Activated CD4-positive, alpha-beta T cell treated with anti-CD3 and anti-CD28 coated beads, Interleukin-2, amount 10 ng/mL, durations not matched to agents 24 days and 14 days (primary cell): ENCODE measurements at regions of chr1 and their contacts with region 1.

Region 1: DNA sequence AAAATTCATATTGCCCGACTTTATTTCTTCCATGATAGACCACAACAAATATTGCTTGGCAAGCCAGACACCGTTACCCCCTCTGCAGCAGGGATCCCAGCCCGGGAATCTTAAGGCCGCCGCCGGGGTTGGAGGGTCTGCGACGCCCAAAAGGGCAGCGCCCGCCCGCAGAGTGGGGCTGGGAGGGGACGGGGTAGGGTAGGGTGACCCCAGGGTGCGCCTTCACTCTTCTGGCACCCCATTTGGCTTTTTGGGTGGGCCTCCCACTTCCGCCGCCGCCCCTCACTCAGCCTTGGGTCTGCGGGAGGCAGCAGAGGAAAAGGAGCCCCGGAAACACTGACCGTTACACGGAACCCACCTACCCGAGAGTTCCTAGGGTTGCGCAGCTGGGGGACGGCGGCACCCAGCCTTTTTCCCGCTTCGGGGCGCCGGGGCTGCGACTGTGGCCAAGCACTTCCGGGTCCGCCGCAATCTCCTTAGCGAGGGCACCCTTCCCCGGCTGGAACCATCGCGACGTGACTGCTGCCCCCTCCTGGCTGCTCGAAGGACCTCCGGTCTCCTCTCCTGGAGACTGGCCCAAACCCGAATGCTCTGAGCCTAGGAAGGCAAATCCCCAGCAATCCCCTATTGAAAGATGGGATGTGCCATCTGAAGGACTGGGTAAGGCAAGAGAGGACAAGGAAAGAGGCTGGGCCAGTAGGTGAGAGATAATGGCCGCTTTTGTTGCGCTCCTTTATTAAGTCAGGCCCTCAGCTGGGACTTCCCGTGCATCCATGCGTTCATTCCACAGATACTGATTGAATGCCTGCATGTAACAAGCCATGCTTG is at the start of gene PIGC:
- DNase-seq: peak; percentile 97
- H3K4me3 Mint-ChIP-seq: peak within 1 kb of the TSS; percentile 91
- H3K27ac Mint-ChIP-seq: peak within 1 kb of the TSS; percentile 88
- H3K4me1 Mint-ChIP-seq: peaks cover 27% of the 10 kb centered on the region
- H3K27me3 Mint-ChIP-seq: no peaks in the 10 kb centered on the region
- total RNA-seq, gene PIGC: 20.4 and 23.9 TPM in 2 replicates

Region 2: DNA sequence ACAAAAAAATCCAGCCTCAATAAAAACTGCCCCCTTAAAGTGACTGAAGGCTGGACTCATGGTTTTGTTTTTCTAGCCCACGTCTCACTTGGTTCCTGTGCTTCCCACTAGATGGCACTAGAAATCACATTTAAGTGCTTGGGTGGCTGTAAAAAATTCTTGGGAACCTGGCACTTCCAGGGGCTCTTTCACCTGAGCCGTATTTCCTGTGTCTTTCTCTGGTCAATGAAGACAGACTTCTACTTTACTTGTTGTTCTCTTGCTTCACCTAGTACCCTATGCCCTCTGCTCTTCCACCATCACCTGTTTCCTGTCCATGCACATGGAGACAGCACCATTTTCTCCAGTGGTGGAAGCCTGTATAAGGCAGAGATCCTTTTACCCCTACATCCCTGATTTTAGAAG is 642.4 kb before region 1 on chr1:
- intact Hi-C with region 1: loop called (anchors 10 kb)
- DNase-seq: no peak
- H3K4me3 Mint-ChIP-seq: no peak overlapping the region
- H3K27ac Mint-ChIP-seq: no peak overlapping the region
- H3K4me1 Mint-ChIP-seq: peaks cover 7% of the 10 kb centered on the region
- H3K27me3 Mint-ChIP-seq: no peaks in the 10 kb centered on the region

Region 3: GRCh38 chr1:172002725-172003345 is 441.0 kb before region 1 on chr1:
- intact Hi-C with region 1: loop called (anchors 1 kb)
- DNase-seq: peak; percentile 80
- H3K4me3 Mint-ChIP-seq: no peak overlapping the region
- H3K27ac Mint-ChIP-seq: no peak overlapping the region
- H3K4me1 Mint-ChIP-seq: peaks cover 3% of the 10 kb centered on the region
- H3K27me3 Mint-ChIP-seq: peaks cover under 1% of the 10 kb centered on the region

Region 4: DNA sequence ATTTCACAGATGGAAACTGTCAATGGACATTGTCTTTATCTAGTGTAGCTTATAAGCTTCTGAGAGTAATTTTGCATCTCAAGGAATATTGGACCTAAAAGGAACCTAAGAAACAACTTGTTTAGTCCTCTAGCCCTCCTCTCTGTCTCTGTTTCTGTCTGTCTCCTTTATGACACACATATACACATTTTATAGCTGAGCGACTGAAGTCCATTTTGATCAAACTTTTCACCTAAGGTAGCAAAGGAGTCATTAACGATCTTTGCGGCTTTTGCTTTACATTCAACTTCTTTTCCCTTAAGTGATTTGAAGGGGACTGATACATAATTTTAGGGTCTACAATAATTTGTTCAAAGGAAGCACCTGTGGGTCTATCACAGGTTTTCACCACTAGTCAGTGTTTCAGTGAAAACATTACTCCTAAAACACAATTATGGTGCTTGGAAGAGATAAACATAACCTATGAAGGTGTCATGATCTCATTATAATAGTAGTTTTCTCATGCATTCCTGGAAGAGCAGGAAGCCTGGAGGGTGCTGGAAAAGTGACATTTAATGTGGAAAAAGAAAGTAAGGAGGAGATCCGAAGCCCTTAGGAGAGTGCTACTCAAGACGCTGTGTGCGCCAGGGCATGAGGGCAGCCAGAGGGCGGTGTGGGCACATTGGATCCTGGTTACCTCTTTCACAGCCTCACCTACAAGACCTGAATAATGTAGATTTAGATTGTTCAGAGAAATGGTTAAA is 353.9 kb before region 1 on chr1:
- intact Hi-C with region 1: loop called (anchors 1 kb)
- DNase-seq: peak; percentile 86
- H3K4me3 Mint-ChIP-seq: no peak overlapping the region
- H3K27ac Mint-ChIP-seq: no peak overlapping the region
- H3K4me1 Mint-ChIP-seq: peaks cover 7% of the 10 kb centered on the region
- H3K27me3 Mint-ChIP-seq: no peaks in the 10 kb centered on the region

Region 5: DNA sequence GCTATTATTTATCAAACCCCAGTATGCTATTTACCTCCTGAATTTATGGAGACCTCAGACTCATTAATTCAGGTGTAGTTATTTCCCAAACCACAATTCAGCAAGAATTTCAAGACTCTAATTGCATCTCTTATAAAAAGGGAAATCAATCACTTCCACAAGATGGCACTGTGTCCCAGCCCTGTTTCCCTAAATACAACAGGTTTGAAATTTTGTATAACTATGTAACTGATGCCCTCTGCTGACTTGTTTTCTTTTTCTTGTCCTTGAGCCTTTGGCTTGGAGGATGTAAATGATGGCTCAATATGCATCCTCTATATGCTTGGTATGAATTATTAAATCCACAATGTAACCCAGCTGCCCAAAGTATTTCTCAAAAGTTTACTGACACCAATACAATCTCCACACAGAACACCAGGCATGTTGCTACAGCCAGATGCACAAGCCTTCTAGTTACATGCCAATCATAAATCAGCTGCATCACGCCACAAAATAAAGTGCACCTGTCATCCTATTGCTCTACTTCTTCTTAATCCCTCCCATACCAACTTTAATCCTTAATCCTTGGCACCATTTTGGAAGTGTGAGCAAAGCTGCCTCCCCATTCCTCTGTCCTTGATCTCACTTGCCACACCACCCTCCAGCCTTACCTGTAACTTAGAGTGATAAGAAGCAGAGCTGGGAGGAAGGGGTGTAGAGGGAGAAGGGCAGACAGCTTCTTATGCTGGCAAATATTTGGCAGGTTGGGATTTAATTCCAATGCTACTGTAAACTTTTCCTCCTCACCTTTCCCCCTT is 14.3 kb before region 1 on chr1:
- intact Hi-C with region 1: loop called (anchors 1 kb)
- DNase-seq: peak; percentile 82
- H3K4me3 Mint-ChIP-seq: no peak overlapping the region
- H3K27ac Mint-ChIP-seq: no peak overlapping the region
- H3K4me1 Mint-ChIP-seq: peaks cover 26% of the 10 kb centered on the region
- H3K27me3 Mint-ChIP-seq: no peaks in the 10 kb centered on the region